ENCODE measurements at regions of chr1 and their contacts with region 1.

Region 1: DNA sequence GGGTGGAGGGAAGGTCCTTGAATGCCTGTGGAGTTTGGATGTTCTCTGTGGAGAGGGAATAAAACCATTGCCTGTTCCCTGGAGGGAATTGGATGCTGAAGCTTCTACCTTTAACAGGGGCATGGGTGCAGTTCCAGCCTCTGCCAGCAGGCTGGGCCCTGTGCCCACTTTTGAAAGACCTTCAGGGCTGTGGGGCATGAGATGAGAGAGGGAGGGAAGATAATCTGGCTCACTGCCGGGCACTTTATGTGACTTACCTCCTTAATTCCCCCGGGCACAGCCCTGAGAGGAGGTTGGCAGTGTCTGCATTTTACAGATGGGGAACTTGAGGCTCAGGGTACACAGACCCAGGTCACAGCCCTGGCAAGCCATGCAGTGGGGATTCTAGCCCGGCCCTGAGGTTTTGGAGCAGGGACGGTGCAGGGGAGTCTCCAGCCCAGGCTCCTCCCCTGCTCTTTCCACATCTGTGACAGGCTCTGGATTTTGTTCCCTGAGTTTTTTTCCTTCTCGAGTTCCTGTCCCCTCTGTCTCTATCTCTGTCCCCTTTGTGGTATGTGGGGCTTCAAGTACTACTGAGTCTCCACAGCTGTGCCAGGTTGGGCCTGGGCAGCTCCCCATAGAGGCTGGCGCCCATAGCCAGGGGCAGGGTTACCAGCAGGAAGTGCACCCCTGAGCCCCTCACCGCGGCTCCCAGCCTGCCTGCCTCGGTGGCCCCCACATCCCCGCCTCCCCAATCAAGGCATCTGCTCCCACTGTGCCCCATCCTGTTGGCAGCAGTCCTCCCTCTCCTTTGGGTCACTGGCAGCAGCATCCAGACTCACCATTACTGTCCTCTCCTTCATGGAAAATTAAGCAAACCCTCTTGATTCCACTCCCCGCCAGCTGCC is 14.0 kb upstream of the THEMIS2 start:
- DNase-seq: no peak
- ATAC-seq: peak; percentile 91
- H3K4me3 ChIP-seq: no peak overlapping the region
- H3K27ac ChIP-seq: no peak overlapping the region
- H3K4me1 ChIP-seq: peaks cover 17% of the 10 kb centered on the region
- H3K27me3 ChIP-seq: no peaks in the 10 kb centered on the region
- CTCF ChIP-seq: peak; percentile 99 to 100 (median 99); a peak in 5 of 6 replicates
- EP300 ChIP-seq: no peak
- POLR2A ChIP-seq: no peak
- RAD21 ChIP-seq: peak; percentile 100

Region 2: DNA sequence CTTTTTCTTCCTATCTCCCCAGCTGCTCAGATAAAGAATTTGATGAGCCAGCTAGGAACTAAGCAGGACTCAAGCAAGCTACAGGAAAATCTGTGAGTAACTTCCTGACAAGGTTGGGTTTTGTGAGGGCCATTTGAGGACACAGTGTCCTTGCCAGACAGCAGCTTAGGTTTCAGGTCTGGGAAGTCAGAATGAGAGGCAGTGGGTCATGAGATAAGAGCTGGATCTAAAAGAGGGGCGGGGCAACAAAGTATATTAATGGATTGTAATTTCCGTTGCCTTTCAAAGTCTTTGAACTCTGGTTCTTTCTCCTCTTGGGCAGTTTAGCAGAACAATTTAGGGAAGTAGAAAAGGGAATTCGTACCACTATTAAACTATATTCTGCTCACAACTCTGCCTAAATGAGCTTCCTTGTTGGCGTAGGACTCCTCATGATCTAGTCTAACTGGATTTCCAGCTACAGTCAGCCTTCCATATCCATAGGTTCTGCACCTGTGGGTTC is 68.7 kb before region 1 on chr1:
- CTCF ChIA-PET with region 1: no interaction called
- POLR2A ChIA-PET with region 1: no interaction called
- RAD21 ChIA-PET with region 1: no interaction called
- SMC1A ChIA-PET with region 1: no interaction called
- in situ Hi-C with region 1: no loop called
- intact Hi-C with region 1: no loop called
- DNase-seq: no peak
- ATAC-seq: no peak
- H3K4me3 ChIP-seq: no peak overlapping the region
- H3K27ac ChIP-seq: no peak overlapping the region
- H3K4me1 ChIP-seq: no peaks in the 10 kb centered on the region
- H3K27me3 ChIP-seq: no peaks in the 10 kb centered on the region
- CTCF ChIP-seq: no peak
- EP300 ChIP-seq: no peak
- POLR2A ChIP-seq: no peak
- RAD21 ChIP-seq: no peak

Region 3: DNA sequence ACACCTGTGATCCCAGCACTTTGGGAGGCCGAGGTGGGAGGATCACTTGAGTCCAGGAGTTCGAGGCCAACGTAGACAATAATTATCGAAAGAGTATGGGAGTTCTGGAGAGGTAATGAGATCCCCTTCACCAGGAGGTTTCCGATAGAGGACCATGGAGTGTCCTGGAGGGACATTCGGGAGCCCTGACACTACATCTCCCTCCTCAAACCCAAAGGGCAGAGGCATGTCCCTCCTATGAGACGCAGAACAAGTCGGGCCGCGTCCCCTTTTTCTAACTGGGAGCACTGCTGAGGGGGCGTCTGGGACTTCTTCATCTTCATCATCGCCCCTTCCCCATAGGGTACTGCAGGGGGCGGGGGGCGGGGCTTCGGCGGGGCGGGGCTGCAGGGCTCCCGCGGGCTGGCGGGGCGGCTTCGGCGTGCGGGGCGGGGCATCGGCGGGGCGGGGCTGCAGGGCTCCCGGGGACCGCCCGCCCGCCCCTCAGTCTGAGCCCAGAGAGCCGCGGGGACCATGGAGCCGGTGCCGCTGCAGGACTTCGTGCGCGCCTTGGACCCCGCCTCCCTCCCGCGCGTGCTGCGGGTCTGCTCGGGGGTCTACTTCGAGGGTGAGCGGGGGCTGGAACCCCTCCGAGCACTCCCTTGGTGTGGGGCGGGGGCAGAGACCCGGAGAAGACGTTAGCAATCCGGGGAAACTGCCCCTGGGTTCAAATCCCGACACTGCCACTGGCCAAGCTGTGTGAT is 13.9 kb after region 1 on chr1 and contains the start of gene THEMIS2:
- CTCF ChIA-PET with region 1: interaction called, 3 read pairs
- POLR2A ChIA-PET with region 1: interaction called, 17 read pairs
- RAD21 ChIA-PET with region 1: interaction called, 7 read pairs
- SMC1A ChIA-PET with region 1: interaction called, 7 read pairs
- in situ Hi-C with region 1: no loop called
- intact Hi-C with region 1: no loop called
- DNase-seq: no peak
- ATAC-seq: peak; percentile 66
- H3K4me3 ChIP-seq: peak within 1 kb of the TSS; percentile 90
- H3K27ac ChIP-seq: peak within 1 kb of the TSS; percentile 93
- H3K4me1 ChIP-seq: peaks cover 44% of the 10 kb centered on the region
- H3K27me3 ChIP-seq: no peaks in the 10 kb centered on the region
- CTCF ChIP-seq: no peak
- EP300 ChIP-seq: no peak
- POLR2A ChIP-seq: peak; percentile 88
- RAD21 ChIP-seq: no peak
- polyA plus RNA-seq, gene THEMIS2: 9.1 to 12.9 TPM

Region 4: DNA sequence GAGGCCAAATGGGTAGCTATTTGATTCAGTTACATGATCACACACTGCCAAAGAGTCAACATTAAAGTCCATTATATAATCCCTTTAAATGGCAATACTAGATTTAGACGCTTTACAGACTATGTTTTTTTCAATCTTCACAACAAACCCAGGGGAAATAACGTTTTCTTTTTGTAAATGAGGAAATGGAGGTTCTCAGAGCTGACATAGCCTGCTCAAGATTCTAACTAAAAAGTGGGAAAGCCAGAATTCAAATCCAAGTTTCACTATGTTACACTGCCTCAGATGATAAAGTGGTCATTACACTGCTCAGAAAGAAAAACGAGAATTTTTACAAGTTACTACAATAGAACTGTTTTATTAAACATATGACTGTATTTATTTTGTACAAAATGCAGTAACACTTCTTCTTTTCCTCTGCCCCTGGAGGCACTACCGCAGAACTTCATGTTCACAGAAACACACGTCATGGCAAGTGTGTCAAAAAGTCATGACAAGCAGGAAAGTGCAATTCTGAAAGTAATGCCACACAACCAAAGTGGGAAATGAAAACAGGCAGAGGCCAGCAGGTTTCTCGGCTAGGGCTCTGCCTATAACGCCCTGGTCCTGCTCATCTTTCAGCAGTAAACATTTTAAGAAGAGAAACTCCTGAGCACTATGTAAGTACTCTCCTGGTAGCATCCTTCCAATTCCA is 33.0 kb after region 1 on chr1:
- CTCF ChIA-PET with region 1: interaction called, 6 read pairs
- POLR2A ChIA-PET with region 1: interaction called, 9 read pairs
- RAD21 ChIA-PET with region 1: interaction called, 9 read pairs
- SMC1A ChIA-PET with region 1: interaction called, 18 read pairs
- in situ Hi-C with region 1: no loop called
- intact Hi-C with region 1: no loop called
- DNase-seq: peak; percentile 86
- ATAC-seq: peak; percentile 71
- H3K4me3 ChIP-seq: peak overlapping the region; percentile 22
- H3K27ac ChIP-seq: peak overlapping the region; percentile 95
- H3K4me1 ChIP-seq: peaks cover 55% of the 10 kb centered on the region
- H3K27me3 ChIP-seq: no peaks in the 10 kb centered on the region
- CTCF ChIP-seq: peak; percentile 17 to 46 (median 44); a peak in 4 of 6 replicates
- EP300 ChIP-seq: peak; percentile 80 to 97; a peak in 3 of 4 replicates
- POLR2A ChIP-seq: no peak
- RAD21 ChIP-seq: peak; percentile 25; the same call in 1 of the 2 replicates

Region 5: GRCh38 chr1:27928216-27928954 is 70.1 kb after region 1 on chr1:
- CTCF ChIA-PET with region 1: interaction called, 10 read pairs
- POLR2A ChIA-PET with region 1: interaction called, 3 read pairs
- RAD21 ChIA-PET with region 1: interaction called, 9 read pairs
- SMC1A ChIA-PET with region 1: interaction called, 4 read pairs
- in situ Hi-C with region 1: no loop called
- intact Hi-C with region 1: no loop called
- DNase-seq: no peak
- ATAC-seq: peak; percentile 67
- H3K4me3 ChIP-seq: no peak overlapping the region
- H3K27ac ChIP-seq: no peak overlapping the region
- H3K4me1 ChIP-seq: peaks cover 4% of the 10 kb centered on the region
- H3K27me3 ChIP-seq: no peaks in the 10 kb centered on the region
- CTCF ChIP-seq: peak; percentile 9 to 14 (median 10); a peak in 1 of 6 replicates
- EP300 ChIP-seq: no peak
- POLR2A ChIP-seq: no peak
- RAD21 ChIP-seq: no peak

Region 6: DNA sequence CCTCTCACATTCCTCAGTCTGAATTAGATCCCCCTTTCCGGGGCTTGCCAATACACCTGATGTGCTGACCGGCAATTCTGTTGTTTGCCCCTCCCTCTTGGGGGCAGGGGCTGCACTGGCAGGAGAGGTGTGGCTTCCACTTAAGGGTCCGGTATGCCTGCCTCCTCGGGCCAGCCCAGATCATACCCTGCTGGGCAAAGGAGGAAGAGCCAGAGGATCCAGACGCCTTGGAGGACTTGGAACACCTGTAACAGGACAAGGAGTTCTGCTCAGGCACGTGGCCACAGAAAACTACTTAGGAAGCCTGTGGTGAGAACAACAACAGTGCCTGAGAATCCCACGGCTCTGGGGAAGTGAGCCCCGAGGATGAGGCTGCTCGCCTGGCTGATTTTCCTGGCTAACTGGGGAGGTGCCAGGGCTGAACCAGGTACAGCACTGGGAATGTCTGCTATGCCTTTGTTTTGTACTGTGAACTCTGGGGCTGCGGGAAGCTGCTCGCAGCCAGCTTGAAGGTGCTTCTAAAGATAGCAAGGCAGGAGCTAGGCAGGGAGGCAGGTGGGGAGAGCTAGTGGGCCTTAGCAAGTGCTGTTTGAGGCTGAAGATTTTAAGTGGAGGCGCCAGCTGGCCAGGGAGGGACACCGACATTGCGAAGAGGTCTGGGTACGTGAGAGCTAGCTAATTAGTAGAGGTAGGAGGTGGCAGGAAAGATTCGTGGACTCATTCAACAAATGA is 76.7 kb after region 1 on chr1 and contains the start of gene SMPDL3B:
- CTCF ChIA-PET with region 1: interaction called, 15 read pairs
- POLR2A ChIA-PET with region 1: no interaction called
- RAD21 ChIA-PET with region 1: interaction called, 7 read pairs
- SMC1A ChIA-PET with region 1: interaction called, 8 read pairs
- in situ Hi-C with region 1: no loop called
- intact Hi-C with region 1: no loop called
- DNase-seq: no peak
- ATAC-seq: peak; percentile 83
- H3K4me3 ChIP-seq: peak within 1 kb of the TSS; percentile 44
- H3K27ac ChIP-seq: no peak within 1 kb of the TSS
- H3K4me1 ChIP-seq: peaks cover 7% of the 10 kb centered on the region
- H3K27me3 ChIP-seq: peaks cover 0 to 2% of the 10 kb centered on the region in 2 experiments; a peak in 2 of 4 replicates
- CTCF ChIP-seq: no peak
- EP300 ChIP-seq: no peak
- POLR2A ChIP-seq: no peak
- RAD21 ChIP-seq: no peak
- polyA plus RNA-seq, gene SMPDL3B: 0.60 to 0.69 TPM

Region 7: GRCh38 chr1:27979151-27979858 is 121.0 kb after region 1 on chr1:
- CTCF ChIA-PET with region 1: interaction called, 50 read pairs
- POLR2A ChIA-PET with region 1: no interaction called
- RAD21 ChIA-PET with region 1: interaction called, 32 read pairs
- SMC1A ChIA-PET with region 1: interaction called, 44 read pairs
- in situ Hi-C with region 1: loop called (anchors 5 kb)
- intact Hi-C with region 1: loop called (anchors 1 kb)
- DNase-seq: peak; percentile 19
- ATAC-seq: peak; percentile 87
- H3K4me3 ChIP-seq: no peak overlapping the region
- H3K27ac ChIP-seq: peak overlapping the region; percentile 25; the same call in 1 of the 2 replicates
- H3K4me1 ChIP-seq: peaks cover 11% of the 10 kb centered on the region
- H3K27me3 ChIP-seq: no peaks in the 10 kb centered on the region
- CTCF ChIP-seq: peak; percentile 25 to 52 (median 51); a peak in 3 of 6 replicates
- EP300 ChIP-seq: no peak
- POLR2A ChIP-seq: no peak
- RAD21 ChIP-seq: peak; percentile 77

Measured in GM12878 (cell line).